Ascending aorta (tissue), 2 donors: ENCODE measurements at regions of chr10 and their contacts with region 1.

Region 1: DNA sequence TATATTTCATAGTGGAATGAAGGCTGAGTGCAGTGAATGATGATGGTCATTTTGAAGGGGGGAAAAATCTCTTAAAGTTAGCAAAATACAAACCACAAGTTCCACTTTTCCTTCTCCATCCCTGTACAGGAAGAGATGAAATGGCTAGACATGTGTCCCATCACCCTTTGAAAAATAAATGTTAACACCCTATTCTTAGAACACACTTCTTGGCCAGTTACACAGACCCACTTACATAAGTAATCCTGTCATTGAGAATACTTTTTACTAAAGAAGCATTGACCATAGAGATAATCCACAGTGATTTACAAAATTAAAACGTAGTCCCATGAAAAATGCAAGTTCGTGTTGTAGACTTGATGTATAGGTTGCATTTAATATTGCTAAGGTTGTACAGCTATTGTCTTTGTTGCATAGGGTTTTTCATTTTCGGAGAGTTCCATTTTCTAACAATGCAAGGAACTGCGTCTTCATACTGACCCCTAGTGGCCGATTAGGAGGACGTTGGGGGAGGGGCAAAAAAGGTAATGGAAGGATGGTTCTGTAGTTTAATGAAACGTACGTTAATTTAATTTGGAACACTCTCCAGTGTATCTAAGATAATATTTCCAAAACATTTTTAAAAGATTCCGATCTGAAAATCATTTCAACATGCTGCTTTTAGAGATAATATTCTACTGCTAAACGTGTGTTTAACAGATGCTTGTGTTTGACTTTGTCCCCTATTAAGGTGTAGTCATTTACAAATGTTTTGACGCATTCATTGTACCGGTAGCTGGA is 60.9 kb downstream of the ARMC3 start:
- DNase-seq: peak in 1 of 2 donors; percentile 79
- H3K4me3 ChIP-seq: no peak overlapping the region
- H3K27ac ChIP-seq: no peak overlapping the region
- H3K4me1 ChIP-seq: peaks cover 0 to 3% of the 10 kb centered on the region in 2 donors
- H3K27me3 ChIP-seq: no peaks in the 10 kb centered on the region
- CTCF ChIP-seq: peak; percentile 86

Region 2: GRCh38 chr10:22003079-22003913 is 985.5 kb before region 1 on chr10 and contains the start of gene DNAJC1:
- intact Hi-C with region 1: loop called (anchors 5 kb)
- DNase-seq: peak; percentile 93 to 99
- H3K4me3 ChIP-seq: peak within 1 kb of the TSS; percentile 74 to 81
- H3K27ac ChIP-seq: peak within 1 kb of the TSS; percentile 96
- H3K4me1 ChIP-seq: peaks cover 0 to 6% of the 10 kb centered on the region in 2 donors
- H3K27me3 ChIP-seq: no peaks in the 10 kb centered on the region
- CTCF ChIP-seq: peak in 2 of 3 experiments; percentile 13 to 15
- total RNA-seq, gene DNAJC1: 26.1 TPM

Region 3: GRCh38 chr10:22228943-22229801 is 759.6 kb before region 1 on chr10:
- intact Hi-C with region 1: loop called (anchors 10 kb)
- DNase-seq: peak; percentile 41 to 92
- H3K4me3 ChIP-seq: peak overlapping the region; percentile 63 to 70
- H3K27ac ChIP-seq: peak overlapping the region; percentile 80 to 85
- H3K4me1 ChIP-seq: peaks cover 0 to 3% of the 10 kb centered on the region in 2 donors
- H3K27me3 ChIP-seq: no peaks in the 10 kb centered on the region
- CTCF ChIP-seq: no peak

Region 4: DNA sequence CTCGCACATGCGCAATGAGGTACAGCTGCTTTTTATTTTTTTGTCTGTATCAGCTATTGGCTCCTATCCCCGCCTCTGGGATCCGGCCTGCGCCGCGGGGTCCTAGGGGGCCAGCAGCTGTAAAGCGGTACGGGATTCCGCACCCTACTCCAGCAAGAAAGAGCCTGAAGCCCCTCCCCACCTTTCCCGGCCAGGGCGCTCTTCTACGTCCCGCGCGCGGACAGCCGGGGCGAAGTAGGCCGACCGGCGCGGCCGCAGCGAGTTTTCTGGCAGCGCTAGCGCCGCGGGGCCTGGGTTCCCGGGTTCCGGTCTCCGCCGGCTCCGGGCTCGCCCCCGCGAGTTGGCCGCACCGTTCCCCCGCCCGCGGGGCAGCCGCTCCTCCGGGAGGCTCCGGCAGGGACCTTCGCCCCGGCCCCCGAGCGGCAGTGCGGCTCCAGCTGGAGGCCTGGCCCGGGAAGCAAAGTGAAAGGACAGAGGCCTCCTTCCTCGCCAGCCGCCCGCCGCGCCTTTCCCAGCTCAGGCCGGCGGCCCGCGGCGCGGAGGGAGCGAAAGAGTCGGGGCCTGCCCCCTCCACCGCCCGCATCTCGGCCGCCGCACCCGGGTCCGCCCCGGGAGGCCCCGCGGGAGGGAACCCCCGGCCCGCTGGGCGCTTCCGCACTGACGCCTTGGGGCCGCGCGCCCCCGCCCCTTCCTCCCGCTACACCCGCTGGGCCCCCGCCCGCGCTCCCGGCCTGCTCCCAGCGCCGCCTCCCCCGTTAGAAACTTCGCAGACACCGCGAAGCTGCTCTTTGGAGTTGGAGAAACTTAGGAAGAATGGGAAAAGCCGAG is 648.2 kb before region 1 on chr10:
- intact Hi-C with region 1: loop called (anchors 10 kb)
- DNase-seq: peak in 1 of 2 donors; percentile 84
- H3K4me3 ChIP-seq: peak overlapping the region; percentile 85 to 99
- H3K27ac ChIP-seq: peak overlapping the region; percentile 94 to 99
- H3K4me1 ChIP-seq: peaks cover 3 to 21% of the 10 kb centered on the region in 2 donors
- H3K27me3 ChIP-seq: peaks cover 62% of the 10 kb centered on the region
- CTCF ChIP-seq: no peak

Region 5: GRCh38 chr10:22550732-22551131 is 438.0 kb before region 1 on chr10:
- intact Hi-C with region 1: loop called (anchors 1 kb)
- DNase-seq: peak in 1 of 2 donors; percentile 67
- H3K4me3 ChIP-seq: no peak overlapping the region
- H3K27ac ChIP-seq: no peak overlapping the region
- H3K4me1 ChIP-seq: no peaks in the 10 kb centered on the region
- H3K27me3 ChIP-seq: no peaks in the 10 kb centered on the region
- CTCF ChIP-seq: peak in 2 of 3 experiments; percentile 46 to 59

Region 6: DNA sequence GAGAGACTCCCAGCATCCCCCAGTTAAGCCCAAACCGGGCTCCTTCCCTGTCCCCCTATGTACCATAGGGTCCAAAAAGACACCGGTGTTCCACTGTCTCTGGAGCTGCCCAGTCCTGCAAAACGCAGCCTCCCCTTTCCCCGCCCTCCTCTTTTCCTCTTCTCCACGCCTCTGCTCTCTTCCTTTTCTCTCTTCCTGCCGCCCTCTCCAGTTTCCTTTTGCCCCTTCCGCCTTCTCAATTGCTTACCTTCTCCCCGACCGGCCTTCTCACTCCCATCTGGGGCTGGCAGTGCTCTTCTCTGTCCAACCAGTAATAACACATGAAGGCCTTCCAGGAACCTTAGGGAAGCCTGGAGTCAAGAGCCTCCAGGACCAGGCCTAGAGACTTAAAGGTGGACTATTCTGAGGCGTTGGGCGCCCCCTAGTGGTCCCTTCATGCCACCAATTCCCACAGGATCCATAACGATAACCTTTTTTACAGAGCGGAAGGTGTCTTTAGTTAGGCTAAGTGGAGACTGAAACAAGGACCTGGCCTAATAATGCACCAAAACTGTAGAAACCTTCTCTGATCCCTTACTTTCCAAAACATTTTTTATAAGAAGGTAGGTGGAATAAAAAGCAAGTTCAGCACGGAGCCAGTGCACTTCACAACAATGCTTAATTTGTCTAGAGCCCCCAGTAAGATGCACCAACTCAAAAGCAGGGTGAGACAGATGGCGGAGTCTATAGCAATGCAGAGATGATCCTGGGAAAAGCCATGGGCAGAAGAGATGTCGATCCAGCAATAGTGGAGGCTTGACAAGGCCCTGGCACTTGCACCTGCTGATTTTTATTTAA is 79.4 kb after region 1 on chr10:
- intact Hi-C with region 1: loop called (anchors 5 kb)
- DNase-seq: peak in 1 of 2 donors; percentile 93
- H3K4me3 ChIP-seq: no peak overlapping the region
- H3K27ac ChIP-seq: peak overlapping the region; percentile 28 to 33
- H3K4me1 ChIP-seq: peaks cover 5 to 12% of the 10 kb centered on the region in 2 donors
- H3K27me3 ChIP-seq: no peaks in the 10 kb centered on the region
- CTCF ChIP-seq: peak; percentile 44 to 87 (median 86)